Posterior vena cava (tissue), 2 donors: ENCODE measurements at regions of chr5 and their contacts with region 1.

Region 1: GRCh38 chr5:82165740-82166530 is 112.2 kb downstream of the RPS23 start:
- DNase-seq: peak; percentile 85

Region 2: DNA sequence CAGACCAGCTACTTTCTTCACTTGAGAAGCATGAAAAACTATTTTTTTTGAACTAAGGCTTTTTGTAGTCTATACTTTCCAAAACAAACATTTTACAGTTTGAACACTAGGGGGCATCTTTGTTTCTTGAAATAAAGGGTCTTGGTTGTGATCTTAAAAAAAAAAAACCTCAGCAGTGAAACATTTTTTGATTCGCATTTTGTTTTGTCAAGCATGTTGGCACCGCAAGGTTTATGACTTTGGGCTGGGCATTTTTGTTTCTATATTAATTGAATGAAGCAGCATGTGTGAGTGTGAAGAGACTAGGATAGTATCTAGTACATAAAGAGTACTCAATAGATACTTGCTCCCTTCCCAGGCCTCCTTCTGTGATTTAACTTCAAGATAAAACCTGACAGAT is 740.4 kb before region 1 on chr5:
- intact Hi-C with region 1: loop called in 1 of 2 experiments (anchors 5 kb)
- DNase-seq: no peak

Region 3: DNA sequence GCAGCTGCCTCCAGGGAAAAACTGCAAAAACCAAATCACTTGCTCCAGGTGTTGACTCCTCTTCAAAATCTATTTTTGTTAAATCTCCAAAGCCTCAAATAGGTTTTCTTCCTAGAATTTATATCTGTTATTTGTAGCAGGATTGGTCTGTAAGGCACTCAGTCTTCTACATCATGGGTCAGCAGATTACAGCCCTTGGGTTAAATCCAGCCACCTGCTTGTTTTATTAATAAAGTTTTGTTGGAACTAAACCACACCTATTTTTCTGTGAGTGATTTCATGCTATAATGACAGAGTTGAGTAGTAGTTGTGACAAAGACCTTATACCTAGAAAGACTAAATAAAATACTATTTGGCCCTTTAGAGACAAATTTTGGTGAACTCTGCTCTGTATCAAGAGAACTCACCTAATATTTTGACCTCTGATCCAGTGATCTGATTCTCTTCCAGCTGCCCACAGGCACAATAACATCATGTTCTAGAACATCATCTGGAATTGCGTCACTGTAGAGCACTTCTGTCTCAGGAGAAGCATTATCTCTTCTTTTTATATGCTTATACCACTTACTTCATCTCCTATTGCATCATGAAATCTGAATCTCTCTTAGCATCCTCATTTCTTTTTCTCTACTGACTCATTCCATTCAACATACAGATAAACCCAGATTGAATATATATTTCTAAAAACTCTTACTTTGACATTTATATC is 17.9 kb before region 1 on chr5:
- intact Hi-C with region 1: no loop called
- DNase-seq: no peak